ENCODE measurements at regions of chr11 and their contacts with region 1.

Region 1: GRCh38 chr11:26297189-26297975 is 34.5 kb upstream of the ANO3 start:
- DNase-seq: no peak
- ATAC-seq: peak in 1 of 4 donors; percentile 55
- H3K4me3 ChIP-seq: no peak overlapping the region
- H3K27ac ChIP-seq: no peak overlapping the region
- H3K4me1 ChIP-seq: no peaks in the 10 kb centered on the region
- H3K27me3 ChIP-seq: no peaks in the 10 kb centered on the region
- CTCF ChIP-seq: peak; percentile 35

Region 2: DNA sequence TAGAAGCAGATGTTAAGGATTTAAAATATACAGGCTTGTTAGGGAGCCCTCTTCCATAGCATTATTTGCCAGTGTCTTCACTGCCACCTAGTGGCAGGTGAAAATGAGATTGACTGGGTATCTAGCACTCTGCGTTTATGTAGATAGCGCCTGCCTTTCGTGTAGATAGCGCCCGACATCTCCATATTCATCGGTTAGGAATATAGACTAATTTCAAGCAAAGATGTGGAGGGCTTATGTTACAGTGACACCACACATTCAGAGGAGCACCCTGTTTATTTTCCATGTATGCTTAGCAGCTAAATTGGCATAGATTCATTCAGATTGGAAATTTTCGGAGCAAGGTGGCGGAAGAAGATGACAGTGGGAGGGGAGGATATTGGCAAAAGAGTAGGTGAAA is 352.5 kb after region 1 on chr11:
- intact Hi-C with region 1: loop called in 1 of 2 experiments (anchors 5 kb)
- DNase-seq: no peak
- ATAC-seq: peak in 3 of 4 donors; percentile 37 to 75 (median 48)
- H3K4me3 ChIP-seq: no peak overlapping the region
- H3K27ac ChIP-seq: no peak overlapping the region
- H3K4me1 ChIP-seq: no peaks in the 10 kb centered on the region
- H3K27me3 ChIP-seq: no peaks in the 10 kb centered on the region
- CTCF ChIP-seq: peak; percentile 50

Region 3: GRCh38 chr11:27158722-27159679 is 861.6 kb after region 1 on chr11:
- intact Hi-C with region 1: loop called in 1 of 2 experiments (anchors 5 kb)
- DNase-seq: peak; percentile 18 to 45
- ATAC-seq: peak; percentile 73 to 98 (median 89)
- H3K4me3 ChIP-seq: no peak overlapping the region
- H3K27ac ChIP-seq: no peak overlapping the region
- H3K4me1 ChIP-seq: no peaks in the 10 kb centered on the region
- H3K27me3 ChIP-seq: no peaks in the 10 kb centered on the region
- CTCF ChIP-seq: peak; percentile 74

Region 4: GRCh38 chr11:27234043-27234668 is 936.8 kb after region 1 on chr11:
- intact Hi-C with region 1: loop called in 1 of 2 experiments (anchors 10 kb)
- DNase-seq: peak; percentile 52 to 61
- ATAC-seq: peak; percentile 89 to 96 (median 94)
- H3K4me3 ChIP-seq: peak overlapping the region; percentile 52
- H3K27ac ChIP-seq: peak overlapping the region; percentile 89
- H3K4me1 ChIP-seq: peaks cover 15% of the 10 kb centered on the region
- H3K27me3 ChIP-seq: no peaks in the 10 kb centered on the region
- CTCF ChIP-seq: peak; percentile 13